ENCODE measurements at regions of chr16 and their contacts with region 1.

Region 1: DNA sequence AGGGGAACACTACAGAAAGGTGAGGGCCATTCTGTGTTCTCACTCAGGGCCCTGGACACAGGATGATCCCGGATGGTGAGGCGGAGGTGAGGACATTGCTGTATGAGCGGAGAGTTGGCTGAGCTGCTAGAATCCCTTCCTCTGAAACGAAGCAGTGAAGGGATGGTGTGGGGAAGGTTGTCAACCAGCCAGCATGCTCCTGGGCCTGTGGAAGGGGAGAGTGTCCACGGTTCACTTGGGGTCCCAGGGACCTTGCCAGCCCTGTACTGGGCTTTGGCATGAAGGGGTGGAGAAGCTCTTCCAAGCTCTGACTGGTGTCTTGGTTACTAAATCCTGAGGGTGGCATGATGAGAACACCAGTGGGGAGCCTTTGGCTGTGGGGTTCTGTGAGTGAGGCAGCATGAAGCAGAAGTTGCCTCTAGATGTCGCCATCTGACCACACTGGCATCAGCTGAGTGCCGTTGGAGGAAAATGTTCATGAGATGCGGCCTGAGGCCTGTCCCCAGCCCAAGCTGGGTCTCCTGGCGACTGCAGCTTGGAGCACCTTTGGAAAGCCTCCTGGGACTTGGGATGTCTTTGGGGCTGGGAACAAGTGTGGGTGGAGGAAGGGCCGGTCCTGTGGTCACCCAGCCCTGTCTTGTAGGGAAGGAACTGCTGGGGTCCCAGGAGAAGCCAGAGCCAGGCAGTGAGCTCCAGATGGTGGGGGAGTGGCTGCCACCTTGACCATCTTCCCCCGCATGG is 14.8 kb downstream of the PDP2 start:
- DNase-seq: peak; percentile 82
- H3K4me3 Mint-ChIP-seq: no peak overlapping the region
- H3K27ac Mint-ChIP-seq: no peak overlapping the region
- H3K4me1 Mint-ChIP-seq: peaks cover 18% of the 10 kb centered on the region
- H3K27me3 Mint-ChIP-seq: peaks cover 6% of the 10 kb centered on the region

Region 2: DNA sequence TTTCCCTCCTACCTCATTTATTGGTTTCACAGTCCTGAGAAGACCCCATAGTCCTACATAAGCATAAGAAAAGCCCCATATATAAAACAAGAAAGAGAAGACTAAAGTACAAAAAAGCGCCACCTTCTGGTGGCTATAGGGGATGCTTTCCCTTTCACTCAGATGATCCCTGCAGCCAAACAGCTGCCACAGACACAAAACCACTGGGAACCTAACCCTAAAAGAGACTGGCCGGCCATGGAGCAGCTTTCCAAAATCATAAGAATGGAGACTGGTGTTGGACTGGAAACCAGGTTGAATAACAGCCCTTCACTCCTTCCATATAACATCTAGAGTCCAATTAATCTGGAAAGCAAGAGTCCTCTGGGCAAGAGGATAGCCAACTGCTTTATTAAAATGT is 155.1 kb before region 1 on chr16:
- CTCF ChIA-PET with region 1: no interaction called
- DNase-seq: peak; percentile 58
- H3K4me3 Mint-ChIP-seq: no peak overlapping the region
- H3K27ac Mint-ChIP-seq: no peak overlapping the region
- H3K4me1 Mint-ChIP-seq: peaks cover 23% of the 10 kb centered on the region
- H3K27me3 Mint-ChIP-seq: no peaks in the 10 kb centered on the region

Region 3: DNA sequence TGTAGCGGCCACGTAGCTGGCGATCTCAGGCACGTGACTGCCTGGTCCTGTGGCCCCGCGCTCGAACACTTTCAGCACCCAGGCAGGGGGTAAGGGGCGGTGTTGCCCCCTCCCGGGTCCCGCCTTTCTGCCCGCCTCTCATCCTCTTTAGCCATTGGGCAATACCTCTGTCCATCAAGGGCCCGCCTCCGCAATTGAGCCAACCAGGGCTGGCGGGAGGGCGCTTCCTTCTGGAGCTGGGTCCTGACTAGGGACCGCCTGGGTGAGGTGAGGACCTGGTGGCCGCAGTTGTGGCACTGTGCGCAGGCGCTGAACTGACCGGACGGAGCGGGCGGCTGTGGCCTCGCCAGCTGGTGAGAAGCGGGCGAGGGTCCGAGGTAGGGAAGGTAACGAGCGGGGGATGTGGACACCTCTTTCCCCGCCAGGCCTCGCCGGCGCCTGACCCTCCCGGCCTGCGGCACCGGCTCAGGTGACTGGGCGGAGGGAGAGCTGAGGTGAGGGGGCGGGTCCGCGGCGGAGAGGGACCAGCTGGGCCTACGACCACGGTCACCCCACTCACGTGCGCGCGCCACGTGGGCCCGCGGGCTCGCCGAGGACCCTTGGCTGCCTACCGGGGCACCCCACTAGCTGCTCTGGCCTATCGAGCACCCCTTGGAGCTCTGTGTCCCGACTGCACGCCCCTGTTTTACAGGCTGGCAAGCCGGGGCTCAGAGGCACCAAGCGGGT is 14.7 kb before region 1 on chr16 and contains the start of gene PDP2:
- CTCF ChIA-PET with region 1: interaction called, 12 read pairs
- DNase-seq: peak; percentile 96
- H3K4me3 Mint-ChIP-seq: peak within 1 kb of the TSS; percentile 99
- H3K27ac Mint-ChIP-seq: peak within 1 kb of the TSS; percentile 89
- H3K4me1 Mint-ChIP-seq: peaks cover 47% of the 10 kb centered on the region
- H3K27me3 Mint-ChIP-seq: peaks cover 6% of the 10 kb centered on the region

Region 4: DNA sequence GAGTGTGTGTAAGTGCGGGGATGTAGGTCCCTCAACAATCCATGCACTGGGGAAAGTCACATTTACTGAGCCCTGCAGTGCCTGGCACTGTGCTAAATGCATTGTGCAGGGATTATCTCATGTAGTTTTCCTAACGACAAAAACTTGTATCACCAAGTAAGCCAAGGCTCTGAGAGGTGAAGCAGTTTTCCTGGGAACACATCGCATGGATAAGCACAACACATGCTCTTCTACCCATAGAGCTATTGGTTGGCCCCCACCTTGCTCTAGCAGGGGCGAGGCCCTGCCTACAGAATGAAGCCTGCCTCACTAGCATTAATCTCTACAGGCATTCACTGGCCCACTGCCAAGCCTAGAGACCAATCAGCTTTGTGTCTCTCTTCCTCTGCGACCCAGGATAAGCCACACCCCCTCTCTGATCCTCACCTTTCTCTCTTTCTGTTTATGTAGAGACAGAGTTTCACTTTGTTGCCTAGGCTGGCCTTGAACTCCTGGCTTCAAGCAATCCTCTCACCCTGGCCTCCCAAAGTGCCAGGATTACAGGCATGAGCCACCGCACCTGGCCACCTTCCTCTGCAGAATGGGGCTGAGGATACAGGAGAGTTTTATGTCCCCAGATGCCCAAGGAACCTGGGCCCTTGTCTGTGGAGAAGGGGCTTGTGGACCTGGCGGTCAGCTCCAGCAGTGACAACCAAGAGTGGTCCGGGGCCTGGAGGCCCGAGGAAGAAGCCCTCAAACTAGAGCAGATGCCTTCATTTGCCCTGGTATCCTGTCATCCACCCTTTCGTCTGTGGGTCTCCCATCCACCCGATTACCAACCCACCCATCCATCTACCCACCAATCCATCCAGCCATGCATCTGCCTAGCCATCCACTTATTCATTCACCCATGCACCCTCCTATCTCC is 10.8 kb after region 1 on chr16:
- CTCF ChIA-PET with region 1: interaction called, 15 read pairs
- DNase-seq: peak; percentile 84
- H3K4me3 Mint-ChIP-seq: no peak overlapping the region
- H3K27ac Mint-ChIP-seq: no peak overlapping the region
- H3K4me1 Mint-ChIP-seq: peaks cover 13% of the 10 kb centered on the region
- H3K27me3 Mint-ChIP-seq: peaks cover 23% of the 10 kb centered on the region

Region 5: GRCh38 chr16:66911112-66911511 is 16.0 kb after region 1 on chr16:
- CTCF ChIA-PET with region 1: interaction called, 36 read pairs
- DNase-seq: no peak
- H3K4me3 Mint-ChIP-seq: no peak overlapping the region
- H3K27ac Mint-ChIP-seq: no peak overlapping the region
- H3K4me1 Mint-ChIP-seq: peaks cover 7% of the 10 kb centered on the region
- H3K27me3 Mint-ChIP-seq: peaks cover 43% of the 10 kb centered on the region

Region 6: GRCh38 chr16:66918803-66919568 is 23.9 kb after region 1 on chr16 and contains the start of gene CDH16:
- CTCF ChIA-PET with region 1: interaction called, 135 read pairs
- DNase-seq: no peak
- H3K4me3 Mint-ChIP-seq: no peak within 1 kb of the TSS
- H3K27ac Mint-ChIP-seq: no peak within 1 kb of the TSS
- H3K4me1 Mint-ChIP-seq: peaks cover 4% of the 10 kb centered on the region
- H3K27me3 Mint-ChIP-seq: peaks cover 86% of the 10 kb centered on the region

Region 7: DNA sequence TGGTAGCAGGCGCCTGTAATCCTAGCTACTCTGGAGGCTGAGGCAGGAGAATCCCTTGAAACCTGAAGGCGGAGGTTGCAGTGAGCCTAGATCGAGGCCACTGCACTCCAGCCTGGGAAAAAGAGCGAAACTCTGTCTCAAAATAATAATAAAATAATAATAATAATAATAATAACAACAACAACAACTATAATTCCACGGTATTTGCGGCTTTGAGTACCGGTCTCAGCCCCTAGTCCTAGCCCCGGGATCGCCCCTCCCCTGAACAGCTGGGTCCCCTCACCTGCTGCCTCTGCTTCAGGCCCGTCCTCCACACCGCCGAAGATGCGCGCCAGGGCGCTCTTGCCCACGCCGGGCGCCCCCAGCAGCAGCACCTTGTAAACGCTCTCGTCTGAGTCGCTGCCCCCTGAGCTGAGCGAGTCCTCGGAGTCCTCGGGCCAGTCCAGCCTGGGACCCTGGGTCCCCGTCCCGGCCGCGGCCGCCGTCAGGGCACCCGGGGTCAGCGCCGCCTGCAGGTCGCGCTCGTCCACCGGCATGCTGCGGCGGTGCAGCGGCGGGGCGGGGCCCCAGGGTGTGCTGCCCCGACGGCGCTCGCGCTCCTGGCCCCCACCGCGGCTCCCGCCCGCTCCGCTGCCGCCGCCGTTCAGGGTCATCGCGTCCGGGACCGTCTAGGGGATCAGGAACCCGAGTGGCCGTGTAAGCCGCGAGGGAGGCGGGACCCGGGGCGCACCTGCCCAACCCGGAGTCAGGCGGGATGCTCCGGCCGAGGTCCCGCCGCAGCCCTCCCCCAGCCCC is 29.6 kb after region 1 on chr16:
- CTCF ChIA-PET with region 1: interaction called, 135 read pairs
- DNase-seq: peak; percentile 60
- H3K4me3 Mint-ChIP-seq: peak overlapping the region; percentile 18
- H3K27ac Mint-ChIP-seq: no peak overlapping the region
- H3K4me1 Mint-ChIP-seq: peaks cover 19% of the 10 kb centered on the region
- H3K27me3 Mint-ChIP-seq: peaks cover 78% of the 10 kb centered on the region

Region 8: GRCh38 chr16:66934153-66934838 is 39.2 kb after region 1 on chr16 and contains the start of gene CIAO2B:
- CTCF ChIA-PET with region 1: interaction called, 135 read pairs
- DNase-seq: peak; percentile 90
- H3K4me3 Mint-ChIP-seq: peak within 1 kb of the TSS; percentile 98
- H3K27ac Mint-ChIP-seq: peak within 1 kb of the TSS; percentile 96
- H3K4me1 Mint-ChIP-seq: peaks cover 54% of the 10 kb centered on the region
- H3K27me3 Mint-ChIP-seq: no peaks in the 10 kb centered on the region